CD4-positive, alpha-beta memory T cell (primary cell): ENCODE measurements at regions of chr5 and their contacts with region 1.

Region 1: DNA sequence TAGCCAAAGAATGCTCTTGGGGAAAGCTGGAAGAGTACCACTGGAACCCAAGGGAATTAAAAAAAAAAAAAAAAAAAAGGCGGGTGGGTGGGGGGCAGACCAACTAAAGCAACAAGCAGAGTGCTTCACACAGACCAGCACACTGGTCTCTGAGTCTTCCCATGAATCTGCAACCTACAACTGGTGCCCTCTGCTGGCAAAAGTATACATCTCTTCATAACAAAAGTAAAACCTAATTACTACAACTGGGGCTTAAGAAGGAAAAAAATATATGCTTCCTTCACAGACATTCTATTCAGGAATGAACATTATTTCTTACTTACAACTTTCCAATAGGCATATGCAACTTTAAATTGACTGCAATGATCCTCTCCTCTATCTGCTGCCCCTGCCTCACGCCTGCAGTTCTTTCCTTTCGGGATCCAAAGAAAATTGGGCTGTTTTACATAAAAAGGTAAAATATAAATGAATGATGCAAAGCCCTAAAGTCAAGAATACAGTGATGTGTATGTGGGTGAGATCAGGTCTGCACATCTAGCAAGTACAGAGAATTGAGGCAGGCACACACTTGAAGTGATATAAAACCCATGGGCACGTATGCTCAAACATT is 7.2 kb upstream of the KLHL3 start:
- DNase-seq: peak; percentile 60 to 71 (median 70)
- H3K4me3 ChIP-seq: no peak overlapping the region
- H3K4me3 Mint-ChIP-seq: no peak overlapping the region
- H3K27ac ChIP-seq: no peak overlapping the region
- H3K27ac Mint-ChIP-seq: no peak overlapping the region
- H3K4me1 ChIP-seq: peaks cover 5% of the 10 kb centered on the region
- H3K4me1 Mint-ChIP-seq: peaks cover 0 to 20% (median 3%) of the 10 kb centered on the region in 4 donors
- H3K27me3 ChIP-seq: no peaks in the 10 kb centered on the region
- H3K27me3 Mint-ChIP-seq: no peaks in the 10 kb centered on the region

Region 2: GRCh38 chr5:137629646-137630045 is 113.5 kb before region 1 on chr5:
- CTCF ChIA-PET with region 1: interaction called, 127 read pairs
- POLR2A ChIA-PET with region 1: no interaction called
- intact Hi-C with region 1: loop called (anchors 1 kb)
- DNase-seq: peak in 4 of 5 donors; percentile 52 to 54 (median 54)
- H3K4me3 ChIP-seq: no peak overlapping the region
- H3K4me3 Mint-ChIP-seq: no peak overlapping the region
- H3K27ac ChIP-seq: no peak overlapping the region
- H3K27ac Mint-ChIP-seq: no peak overlapping the region
- H3K4me1 ChIP-seq: no peaks in the 10 kb centered on the region
- H3K4me1 Mint-ChIP-seq: no peaks in the 10 kb centered on the region
- H3K27me3 ChIP-seq: no peaks in the 10 kb centered on the region
- H3K27me3 Mint-ChIP-seq: no peaks in the 10 kb centered on the region

Region 3: GRCh38 chr5:137665678-137666460 is 77.3 kb before region 1 on chr5:
- CTCF ChIA-PET with region 1: interaction called, 653 read pairs
- POLR2A ChIA-PET with region 1: interaction called, 31 read pairs
- intact Hi-C with region 1: no loop called
- DNase-seq: peak; percentile 41 to 52 (median 49)
- H3K4me3 ChIP-seq: no peak overlapping the region
- H3K4me3 Mint-ChIP-seq: peak overlapping the region in 2 of 8 donors; percentile 12 to 59
- H3K27ac ChIP-seq: no peak overlapping the region
- H3K27ac Mint-ChIP-seq: peak overlapping the region; percentile 5 to 74 (median 37)
- H3K4me1 ChIP-seq: peaks cover 13% of the 10 kb centered on the region
- H3K4me1 Mint-ChIP-seq: peaks cover 11 to 20% (median 14%) of the 10 kb centered on the region in 4 donors
- H3K27me3 ChIP-seq: no peaks in the 10 kb centered on the region
- H3K27me3 Mint-ChIP-seq: no peaks in the 10 kb centered on the region

Region 4: GRCh38 chr5:137695651-137696428 is 47.3 kb before region 1 on chr5:
- CTCF ChIA-PET with region 1: interaction called, 186 read pairs
- POLR2A ChIA-PET with region 1: interaction called, 48 read pairs
- intact Hi-C with region 1: no loop called
- DNase-seq: peak; percentile 42 to 66 (median 52)
- H3K4me3 ChIP-seq: peak overlapping the region in 1 of 2 donors; percentile 9
- H3K4me3 Mint-ChIP-seq: peak overlapping the region; percentile 69 to 89 (median 81)
- H3K27ac ChIP-seq: peak overlapping the region; percentile 4
- H3K27ac Mint-ChIP-seq: peak overlapping the region; percentile 86 to 96 (median 92)
- H3K4me1 ChIP-seq: peaks cover 47% of the 10 kb centered on the region
- H3K4me1 Mint-ChIP-seq: peaks cover 34 to 68% (median 56%) of the 10 kb centered on the region in 4 donors
- H3K27me3 ChIP-seq: no peaks in the 10 kb centered on the region
- H3K27me3 Mint-ChIP-seq: no peaks in the 10 kb centered on the region

Region 5: DNA sequence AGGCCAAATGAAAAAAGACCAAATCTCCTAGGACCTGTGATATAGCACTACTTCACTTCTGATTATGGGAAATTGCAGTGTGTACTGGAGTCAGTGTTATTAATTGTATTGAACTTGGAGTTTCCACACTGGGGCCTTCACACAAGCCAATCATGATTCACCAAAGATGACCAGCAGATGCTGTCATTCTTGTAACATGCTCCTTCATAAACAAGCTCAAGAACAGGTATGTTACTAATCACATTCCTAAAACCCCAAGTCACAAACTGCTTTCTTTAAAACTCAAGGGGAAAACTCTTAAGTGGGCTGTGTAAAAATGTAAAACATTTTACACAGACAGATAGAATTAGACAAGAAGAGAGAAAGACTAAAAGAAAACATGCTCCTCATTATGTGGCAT is 12.8 kb before region 1 on chr5:
- CTCF ChIA-PET with region 1: interaction called, 36 read pairs
- POLR2A ChIA-PET with region 1: no interaction called
- intact Hi-C with region 1: no loop called
- DNase-seq: no peak
- H3K4me3 ChIP-seq: no peak overlapping the region
- H3K4me3 Mint-ChIP-seq: peak overlapping the region in 1 of 8 donors; percentile 14
- H3K27ac ChIP-seq: no peak overlapping the region
- H3K27ac Mint-ChIP-seq: no peak overlapping the region
- H3K4me1 ChIP-seq: peaks cover 35% of the 10 kb centered on the region
- H3K4me1 Mint-ChIP-seq: peaks cover 0 to 23% (median 19%) of the 10 kb centered on the region in 4 donors
- H3K27me3 ChIP-seq: no peaks in the 10 kb centered on the region
- H3K27me3 Mint-ChIP-seq: no peaks in the 10 kb centered on the region

Region 6: DNA sequence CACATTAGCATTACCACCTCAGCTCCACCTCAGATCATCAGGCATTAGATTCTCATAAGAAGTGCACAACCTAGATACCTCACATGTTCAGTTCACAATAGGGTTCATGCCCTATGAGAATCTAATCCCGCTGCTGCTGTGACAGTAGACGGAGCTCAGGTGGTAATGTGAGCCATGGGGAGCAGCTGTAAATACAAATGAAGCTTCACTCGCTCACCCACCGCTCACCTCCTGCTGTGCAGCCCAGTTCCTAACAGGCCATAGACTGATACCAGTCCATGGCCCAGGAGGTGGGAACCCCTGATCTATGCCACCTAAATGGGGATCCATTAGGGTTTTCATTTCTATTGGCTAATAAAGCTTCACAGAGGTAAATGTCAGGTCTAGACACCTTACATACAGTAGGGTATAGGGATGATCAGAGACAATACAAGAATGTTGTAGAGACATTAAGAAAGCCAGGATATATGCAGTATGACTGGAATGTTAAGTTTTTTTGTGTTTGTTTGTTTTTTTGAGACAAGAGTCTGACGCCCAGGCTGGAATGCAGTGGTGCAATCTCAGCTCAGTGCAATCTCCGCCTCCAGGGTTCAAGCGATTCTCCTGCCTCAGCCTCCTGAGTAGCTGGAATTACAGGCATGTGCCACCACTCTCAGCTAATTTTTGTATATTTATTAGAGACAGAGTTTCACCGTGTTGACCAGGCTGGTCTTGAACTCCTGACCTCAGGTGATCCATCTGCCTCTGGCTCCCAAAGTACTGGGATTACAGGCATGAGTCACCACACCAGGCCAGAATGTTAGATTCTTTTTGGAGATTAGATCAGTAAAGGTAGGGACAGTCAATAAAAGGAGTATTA is 17.4 kb after region 1 on chr5:
- CTCF ChIA-PET with region 1: interaction called, 18 read pairs
- POLR2A ChIA-PET with region 1: interaction called, 85 read pairs
- intact Hi-C with region 1: no loop called
- DNase-seq: no peak
- H3K4me3 ChIP-seq: no peak overlapping the region
- H3K4me3 Mint-ChIP-seq: no peak overlapping the region
- H3K27ac ChIP-seq: no peak overlapping the region
- H3K27ac Mint-ChIP-seq: no peak overlapping the region
- H3K4me1 ChIP-seq: no peaks in the 10 kb centered on the region
- H3K4me1 Mint-ChIP-seq: peaks cover 0 to 4% (median 0%) of the 10 kb centered on the region in 4 donors
- H3K27me3 ChIP-seq: no peaks in the 10 kb centered on the region
- H3K27me3 Mint-ChIP-seq: peaks cover 2 to 15% of the 10 kb centered on the region in 2 donors

Region 7: DNA sequence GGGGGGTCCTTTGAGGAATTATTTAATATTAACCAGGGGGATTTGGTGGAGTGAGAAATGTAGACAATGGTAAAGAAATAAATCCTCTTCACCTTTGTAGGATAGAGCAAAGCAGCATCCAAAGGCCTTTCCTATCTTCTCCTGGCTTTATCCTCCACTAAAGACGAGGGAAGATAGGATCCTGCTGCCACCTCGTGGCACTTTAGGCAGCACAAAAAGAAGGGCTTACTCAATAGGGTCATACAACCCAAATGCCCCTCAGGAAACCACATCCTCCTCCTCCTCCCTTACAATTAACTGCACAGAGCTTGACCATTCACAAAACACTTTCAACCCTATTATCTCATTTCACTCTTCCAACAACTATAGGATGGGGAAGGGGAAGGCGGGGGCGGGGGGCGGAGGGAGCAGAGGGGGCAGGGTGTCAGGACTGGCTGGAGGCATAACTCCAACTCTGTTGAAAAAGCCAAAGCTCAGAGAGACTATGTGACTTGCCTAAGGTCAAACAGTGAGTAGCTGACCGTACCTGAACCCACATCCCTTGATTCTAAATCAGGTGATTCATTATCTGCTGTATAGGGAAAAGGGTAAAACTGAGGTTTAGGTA is 79.1 kb after region 1 on chr5:
- CTCF ChIA-PET with region 1: no interaction called
- POLR2A ChIA-PET with region 1: no interaction called
- intact Hi-C with region 1: no loop called
- DNase-seq: no peak
- H3K4me3 ChIP-seq: no peak overlapping the region
- H3K4me3 Mint-ChIP-seq: no peak overlapping the region
- H3K27ac ChIP-seq: no peak overlapping the region
- H3K27ac Mint-ChIP-seq: peak overlapping the region in 1 of 7 donors; percentile 42
- H3K4me1 ChIP-seq: no peaks in the 10 kb centered on the region
- H3K4me1 Mint-ChIP-seq: no peaks in the 10 kb centered on the region
- H3K27me3 ChIP-seq: no peaks in the 10 kb centered on the region
- H3K27me3 Mint-ChIP-seq: no peaks in the 10 kb centered on the region

Region 8: GRCh38 chr5:138065102-138065501 is 322.0 kb after region 1 on chr5:
- CTCF ChIA-PET with region 1: no interaction called
- POLR2A ChIA-PET with region 1: no interaction called
- intact Hi-C with region 1: no loop called
- DNase-seq: no peak
- H3K4me3 ChIP-seq: no peak overlapping the region
- H3K4me3 Mint-ChIP-seq: no peak overlapping the region
- H3K27ac ChIP-seq: no peak overlapping the region
- H3K27ac Mint-ChIP-seq: peak overlapping the region in 2 of 7 donors; percentile 7 to 29
- H3K4me1 ChIP-seq: no peaks in the 10 kb centered on the region
- H3K4me1 Mint-ChIP-seq: peaks cover 3 to 6% (median 5%) of the 10 kb centered on the region in 4 donors
- H3K27me3 ChIP-seq: no peaks in the 10 kb centered on the region
- H3K27me3 Mint-ChIP-seq: peaks cover 0 to 2% of the 10 kb centered on the region in 2 donors